ENCODE measurements at regions of chr12 and their contacts with region 1.

Region 1: DNA sequence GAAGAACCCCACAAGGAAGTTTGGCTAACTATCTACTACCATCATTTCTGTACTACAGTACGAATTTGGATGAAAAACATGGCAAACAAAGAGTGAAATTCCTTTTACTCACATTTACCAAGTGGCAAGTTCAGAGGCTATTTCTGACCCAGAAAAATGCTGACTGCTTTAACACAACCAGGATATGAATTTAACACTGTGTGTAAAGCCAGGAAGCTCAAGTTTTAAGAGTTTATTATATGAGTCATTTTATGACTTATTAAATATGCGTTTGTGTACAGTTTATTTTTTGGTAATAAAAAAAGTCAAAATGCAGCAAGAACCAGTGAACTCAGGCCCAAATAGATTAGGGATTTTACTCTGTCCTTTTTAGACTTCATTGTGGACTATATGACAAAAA is 58.4 kb upstream of the STAC3 start:
- DNase-seq: no peak
- H3K4me3 ChIP-seq: no peak overlapping the region
- CTCF ChIP-seq: no peak

Region 2: DNA sequence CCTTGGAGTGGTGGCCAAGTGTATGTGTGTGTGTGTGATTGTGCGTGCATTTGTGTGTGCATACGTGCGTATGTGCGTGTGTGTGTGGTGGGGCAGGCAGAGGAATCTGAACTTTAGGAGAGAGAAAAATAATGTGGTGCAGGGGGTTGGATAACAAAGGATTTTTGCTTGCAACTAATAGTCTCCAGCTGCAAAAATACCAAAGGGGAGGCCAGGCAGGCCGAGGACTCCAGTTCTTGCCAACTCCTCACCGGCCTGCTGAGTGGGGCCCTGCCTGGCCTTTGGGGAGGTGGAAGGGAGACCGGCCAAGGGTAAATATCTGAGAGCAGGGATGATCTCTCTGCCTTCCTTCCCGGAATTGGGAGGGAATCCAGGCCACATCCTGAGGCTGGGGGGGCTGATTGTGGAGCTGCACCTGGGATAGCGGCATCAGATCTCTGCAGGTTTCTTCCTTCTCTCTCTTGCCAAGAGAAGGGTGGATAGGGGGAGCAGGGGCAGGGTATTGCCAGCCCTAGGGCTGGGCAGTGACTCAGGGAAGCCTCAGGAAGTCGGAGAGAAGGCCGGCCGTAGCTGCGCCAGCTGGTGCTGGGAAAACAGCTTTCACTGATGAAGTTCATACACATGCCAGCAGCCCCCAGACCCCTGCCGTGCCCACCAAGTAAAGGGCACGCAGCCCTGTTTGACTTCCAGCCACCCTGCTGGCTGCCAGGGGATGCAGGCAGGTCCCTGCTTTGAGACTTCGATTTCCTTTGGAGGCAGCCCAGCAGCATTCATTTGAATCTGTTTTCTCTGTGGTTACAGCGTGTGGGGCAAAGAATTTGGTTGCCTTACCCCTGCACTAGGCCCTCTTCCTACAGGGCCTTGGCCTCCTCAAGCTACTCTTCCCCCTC is 157.4 kb before region 1 on chr12:
- in situ Hi-C with region 1: no loop called
- DNase-seq: peak; percentile 91
- H3K4me3 ChIP-seq: no peak overlapping the region
- CTCF ChIP-seq: peak; percentile 1

Region 3: GRCh38 chr12:57462251-57462911 is 153.0 kb after region 1 on chr12:
- in situ Hi-C with region 1: loop called (anchors 25 kb)
- DNase-seq: peak; percentile 66
- H3K4me3 ChIP-seq: peak overlapping the region; percentile 51
- CTCF ChIP-seq: peak; percentile 96

Measured in astrocyte of the cerebellum (primary cell).